Activated CD4-positive, alpha-beta T cell treated with anti-CD3 and anti-CD28 coated beads for 36 hours (primary cell): ENCODE measurements at regions of chr4 and their contacts with region 1.

Region 1: GRCh38 chr4:77950203-77950602 is 87.6 kb downstream of the MRPL1 start:
- DNase-seq: no peak
- ATAC-seq: no peak
- H3K4me3 Mint-ChIP-seq: no peak overlapping the region
- H3K27ac Mint-ChIP-seq: no peak overlapping the region
- H3K4me1 Mint-ChIP-seq: peaks cover 10% of the 10 kb centered on the region
- H3K27me3 Mint-ChIP-seq: no peaks in the 10 kb centered on the region

Region 2: GRCh38 chr4:77843628-77844027 is 106.6 kb before region 1 on chr4:
- CTCF ChIA-PET with region 1: no interaction called
- POLR2A ChIA-PET with region 1: no interaction called
- intact Hi-C with region 1: no loop called
- DNase-seq: no peak
- ATAC-seq: peak; percentile 88
- H3K4me3 Mint-ChIP-seq: no peak overlapping the region
- H3K27ac Mint-ChIP-seq: peak overlapping the region; percentile 56
- H3K4me1 Mint-ChIP-seq: peaks cover 25% of the 10 kb centered on the region
- H3K27me3 Mint-ChIP-seq: no peaks in the 10 kb centered on the region

Region 3: GRCh38 chr4:78056265-78057129 is 106.3 kb after region 1 on chr4:
- CTCF ChIA-PET with region 1: no interaction called
- POLR2A ChIA-PET with region 1: no interaction called
- intact Hi-C with region 1: loop called (anchors 5 kb)
- DNase-seq: peak; percentile 61
- ATAC-seq: peak; percentile 76
- H3K4me3 Mint-ChIP-seq: peak overlapping the region; percentile 72
- H3K27ac Mint-ChIP-seq: no peak overlapping the region
- H3K4me1 Mint-ChIP-seq: peaks cover 24% of the 10 kb centered on the region
- H3K27me3 Mint-ChIP-seq: peaks cover 53% of the 10 kb centered on the region

Region 4: GRCh38 chr4:78542373-78542772 is 592.2 kb after region 1 on chr4:
- CTCF ChIA-PET with region 1: no interaction called
- POLR2A ChIA-PET with region 1: no interaction called
- intact Hi-C with region 1: loop called in 1 of 2 experiments (anchors 1 kb)
- DNase-seq: no peak
- ATAC-seq: no peak
- H3K4me3 Mint-ChIP-seq: no peak overlapping the region
- H3K27ac Mint-ChIP-seq: no peak overlapping the region
- H3K4me1 Mint-ChIP-seq: peaks cover 14% of the 10 kb centered on the region
- H3K27me3 Mint-ChIP-seq: peaks cover 19% of the 10 kb centered on the region

Region 5: GRCh38 chr4:79174490-79175252 is 1224.5 kb after region 1 on chr4:
- CTCF ChIA-PET with region 1: no interaction called
- POLR2A ChIA-PET with region 1: no interaction called
- intact Hi-C with region 1: no loop called
- DNase-seq: no peak
- ATAC-seq: no peak
- H3K4me3 Mint-ChIP-seq: no peak overlapping the region
- H3K27ac Mint-ChIP-seq: no peak overlapping the region
- H3K4me1 Mint-ChIP-seq: no peaks in the 10 kb centered on the region
- H3K27me3 Mint-ChIP-seq: no peaks in the 10 kb centered on the region